ENCODE measurements at regions of chr20 and their contacts with region 1.

Region 1: GRCh38 chr20:13546497-13547131 is 92.1 kb downstream of the TASP1 start:
- DNase-seq: peak; percentile 81 to 87
- H3K4me3 ChIP-seq: no peak overlapping the region
- H3K4me3 Mint-ChIP-seq: no peak overlapping the region
- H3K27ac Mint-ChIP-seq: no peak overlapping the region
- H3K4me1 ChIP-seq: no peaks in the 10 kb centered on the region
- H3K4me1 Mint-ChIP-seq: no peaks in the 10 kb centered on the region
- H3K27me3 ChIP-seq: no peaks in the 10 kb centered on the region
- H3K27me3 Mint-ChIP-seq: no peaks in the 10 kb centered on the region
- CTCF ChIP-seq: peak; percentile 82 to 90

Region 2: DNA sequence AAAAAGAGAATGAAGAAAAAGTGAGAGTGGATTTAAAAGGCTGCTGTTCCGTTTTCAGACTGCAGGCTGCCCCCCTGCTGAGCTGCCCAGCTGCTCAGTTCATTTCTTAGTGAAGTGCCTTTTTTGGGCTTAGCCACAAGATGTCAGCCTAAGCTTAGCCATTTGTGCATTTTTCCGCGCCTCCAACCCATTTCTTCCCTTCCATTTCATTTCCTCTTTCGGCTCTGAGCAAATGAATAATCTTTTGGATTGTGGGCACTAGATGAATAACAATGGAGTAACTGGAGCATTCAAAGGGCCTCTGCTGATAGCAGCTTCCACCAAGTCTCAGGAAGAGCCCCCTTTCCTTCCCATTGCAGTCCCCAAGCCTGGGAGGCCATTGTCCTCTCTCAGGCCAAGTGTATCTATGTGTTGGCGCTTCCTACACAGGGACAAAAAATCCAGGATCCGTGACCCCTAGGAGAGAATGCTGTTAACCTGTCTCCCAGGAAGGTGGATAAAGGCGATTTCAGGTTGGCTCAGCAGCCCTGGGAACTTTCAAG is 621.3 kb before region 1 on chr20:
- CTCF ChIA-PET with region 1: interaction called, 8 read pairs
- POLR2A ChIA-PET with region 1: no interaction called
- intact Hi-C with region 1: loop called (anchors 2 kb)
- DNase-seq: peak; percentile 79
- H3K4me3 ChIP-seq: no peak overlapping the region
- H3K4me3 Mint-ChIP-seq: peak overlapping the region; percentile 43
- H3K27ac Mint-ChIP-seq: no peak overlapping the region
- H3K4me1 ChIP-seq: peaks cover 27% of the 10 kb centered on the region
- H3K4me1 Mint-ChIP-seq: peaks cover 23% of the 10 kb centered on the region
- H3K27me3 ChIP-seq: no peaks in the 10 kb centered on the region
- H3K27me3 Mint-ChIP-seq: no peaks in the 10 kb centered on the region
- CTCF ChIP-seq: peak; percentile 93 to 97

Region 3: GRCh38 chr20:13119583-13119982 is 427.0 kb before region 1 on chr20:
- CTCF ChIA-PET with region 1: interaction called, 19 read pairs
- POLR2A ChIA-PET with region 1: no interaction called
- intact Hi-C with region 1: loop called (anchors 1 kb)
- DNase-seq: peak; percentile 52 to 80
- H3K4me3 ChIP-seq: no peak overlapping the region
- H3K4me3 Mint-ChIP-seq: no peak overlapping the region
- H3K27ac Mint-ChIP-seq: no peak overlapping the region
- H3K4me1 ChIP-seq: peaks cover 4% of the 10 kb centered on the region; the same call in 1 of the 2 replicates
- H3K4me1 Mint-ChIP-seq: no peaks in the 10 kb centered on the region
- H3K27me3 ChIP-seq: no peaks in the 10 kb centered on the region
- H3K27me3 Mint-ChIP-seq: no peaks in the 10 kb centered on the region
- CTCF ChIP-seq: peak; percentile 77 to 89

Region 4: GRCh38 chr20:13302647-13303450 is 243.8 kb before region 1 on chr20:
- CTCF ChIA-PET with region 1: interaction called, 7 read pairs
- POLR2A ChIA-PET with region 1: no interaction called
- intact Hi-C with region 1: loop called (anchors 1 kb)
- DNase-seq: peak; percentile 62 to 71
- H3K4me3 ChIP-seq: no peak overlapping the region
- H3K4me3 Mint-ChIP-seq: peak overlapping the region; percentile 42
- H3K27ac Mint-ChIP-seq: peak overlapping the region; percentile 89
- H3K4me1 ChIP-seq: peaks cover 32% of the 10 kb centered on the region
- H3K4me1 Mint-ChIP-seq: peaks cover 18% of the 10 kb centered on the region
- H3K27me3 ChIP-seq: no peaks in the 10 kb centered on the region
- H3K27me3 Mint-ChIP-seq: no peaks in the 10 kb centered on the region
- CTCF ChIP-seq: peak; percentile 56 to 66

Region 5: DNA sequence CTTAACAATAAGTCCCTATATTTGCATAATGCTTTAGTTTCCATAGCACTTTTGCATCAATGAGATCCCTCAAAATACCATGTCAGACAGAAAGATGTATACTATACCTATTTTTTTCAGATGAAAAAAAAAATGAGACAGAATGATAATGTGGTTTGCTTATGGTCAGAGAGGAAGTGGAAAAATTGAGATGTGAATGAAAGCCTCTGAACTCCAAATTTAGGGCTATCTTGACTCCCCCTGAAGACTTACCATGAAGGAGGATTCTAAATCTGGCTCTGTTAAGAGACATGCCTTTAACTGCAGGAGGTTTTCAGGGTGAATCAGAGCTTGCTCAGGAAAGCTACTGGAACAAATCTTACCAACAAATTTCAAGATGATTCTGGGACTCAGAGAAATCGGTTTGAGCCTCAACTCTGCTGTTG is 149.3 kb before region 1 on chr20:
- CTCF ChIA-PET with region 1: interaction called, 3 read pairs
- POLR2A ChIA-PET with region 1: no interaction called
- intact Hi-C with region 1: loop called (anchors 10 kb)
- DNase-seq: no peak
- H3K4me3 ChIP-seq: no peak overlapping the region
- H3K4me3 Mint-ChIP-seq: no peak overlapping the region
- H3K27ac Mint-ChIP-seq: no peak overlapping the region
- H3K4me1 ChIP-seq: no peaks in the 10 kb centered on the region
- H3K4me1 Mint-ChIP-seq: no peaks in the 10 kb centered on the region
- H3K27me3 ChIP-seq: no peaks in the 10 kb centered on the region
- H3K27me3 Mint-ChIP-seq: no peaks in the 10 kb centered on the region
- CTCF ChIP-seq: no peak

Region 6: DNA sequence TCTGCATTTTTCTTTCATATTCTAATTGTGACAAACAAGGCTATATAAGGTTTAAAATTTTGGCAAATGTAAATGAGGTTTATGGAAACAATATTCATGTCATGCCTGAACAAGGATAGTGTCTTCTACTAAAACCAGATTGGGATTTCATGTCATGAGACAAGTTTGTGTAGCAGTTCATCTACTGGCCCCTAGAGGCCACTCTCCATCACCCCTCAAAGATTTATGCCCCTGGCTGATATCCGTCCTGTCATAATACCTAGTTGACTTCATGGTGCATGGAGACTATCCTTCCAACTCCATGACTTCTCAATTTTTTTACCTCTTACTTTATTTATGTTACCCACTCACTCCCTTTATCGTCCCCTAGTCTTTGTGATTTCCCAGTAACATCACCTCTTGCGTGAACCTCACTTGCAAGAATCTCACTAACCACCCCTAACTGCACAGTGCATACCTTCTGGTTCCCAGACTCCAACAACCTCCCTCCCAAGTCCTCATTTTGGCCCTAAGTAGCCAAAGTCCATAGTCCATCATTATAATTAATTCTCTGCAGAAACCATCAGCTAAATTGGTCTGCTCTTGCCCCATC is 87.7 kb before region 1 on chr20:
- CTCF ChIA-PET with region 1: interaction called, 10 read pairs
- POLR2A ChIA-PET with region 1: no interaction called
- intact Hi-C with region 1: loop called (anchors 1 kb)
- DNase-seq: peak in 1 of 2 experiments; percentile 43
- H3K4me3 ChIP-seq: no peak overlapping the region
- H3K4me3 Mint-ChIP-seq: no peak overlapping the region
- H3K27ac Mint-ChIP-seq: no peak overlapping the region
- H3K4me1 ChIP-seq: no peaks in the 10 kb centered on the region
- H3K4me1 Mint-ChIP-seq: no peaks in the 10 kb centered on the region
- H3K27me3 ChIP-seq: no peaks in the 10 kb centered on the region
- H3K27me3 Mint-ChIP-seq: no peaks in the 10 kb centered on the region
- CTCF ChIP-seq: peak; percentile 76 to 86